ENCODE measurements at regions of chr15 and their contacts with region 1.

Region 1: GRCh38 chr15:51982013-51982769 is 10.6 kb upstream of the LEO1 start:
- DNase-seq: peak; percentile 76
- ATAC-seq: peak; percentile 90
- H3K4me3 ChIP-seq: peak overlapping the region; percentile 47
- H3K27ac ChIP-seq: peak overlapping the region; percentile 53
- H3K4me1 ChIP-seq: peaks cover 19% of the 10 kb centered on the region
- H3K27me3 ChIP-seq: no peaks in the 10 kb centered on the region
- CTCF ChIP-seq: peak; percentile 72

Region 2: DNA sequence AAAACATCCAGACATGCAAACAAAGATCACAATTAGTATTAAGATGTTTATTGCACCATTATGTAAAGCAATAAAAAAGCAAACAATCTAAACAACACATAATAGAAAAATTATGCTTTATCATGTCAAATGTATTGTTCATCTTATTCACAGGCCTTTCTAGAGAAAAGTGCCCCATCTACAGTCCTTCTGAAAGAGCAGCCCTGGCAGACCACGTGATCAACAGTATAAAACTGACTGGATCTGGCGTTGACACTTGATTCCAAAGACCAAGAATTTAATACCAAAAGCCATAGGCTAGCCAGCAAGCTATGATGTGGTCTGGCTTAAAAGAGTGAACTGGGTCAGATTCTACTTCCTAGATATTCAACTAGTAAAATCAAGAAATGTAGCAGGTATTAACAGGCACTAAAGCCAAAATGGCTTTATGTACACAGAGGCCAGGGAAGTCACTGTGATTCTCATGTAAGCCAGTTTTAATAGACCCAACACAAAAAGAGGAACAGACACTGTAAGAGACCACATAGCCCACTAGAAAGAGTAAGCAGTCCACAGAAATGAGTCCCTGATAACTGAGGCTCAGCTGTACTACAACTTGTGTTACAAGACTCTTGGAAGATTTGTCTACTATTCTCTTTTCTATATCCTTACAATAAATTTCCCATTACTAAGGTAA is 392.2 kb before region 1 on chr15:
- CTCF ChIA-PET with region 1: no interaction called
- POLR2A ChIA-PET with region 1: no interaction called
- intact Hi-C with region 1: no loop called
- DNase-seq: no peak
- ATAC-seq: no peak
- H3K4me3 ChIP-seq: no peak overlapping the region
- H3K27ac ChIP-seq: no peak overlapping the region
- H3K4me1 ChIP-seq: no peaks in the 10 kb centered on the region
- H3K27me3 ChIP-seq: no peaks in the 10 kb centered on the region
- CTCF ChIP-seq: no peak

Region 3: DNA sequence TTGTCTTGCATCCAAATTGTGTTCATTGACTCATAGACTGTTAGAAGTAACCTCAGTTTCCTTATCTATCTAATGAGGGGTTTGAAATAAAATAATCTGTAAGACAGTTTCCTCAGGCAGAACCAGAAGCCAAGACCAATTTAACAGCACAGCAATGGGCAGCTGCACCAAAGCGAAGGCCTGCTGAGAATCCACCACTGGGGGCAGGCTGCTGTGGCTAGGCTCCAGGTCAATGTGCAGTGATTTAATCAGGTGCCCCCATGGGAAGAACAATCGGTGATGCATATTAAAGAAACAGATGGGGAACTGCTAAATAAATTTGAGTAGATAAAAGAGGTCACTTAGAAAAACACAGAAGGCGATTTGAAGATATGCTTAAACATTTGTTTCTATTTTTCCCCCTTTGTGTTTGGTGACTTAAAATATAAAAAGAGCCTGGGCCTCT is 180.8 kb before region 1 on chr15:
- CTCF ChIA-PET with region 1: no interaction called
- POLR2A ChIA-PET with region 1: no interaction called
- intact Hi-C with region 1: no loop called
- DNase-seq: peak; percentile 49
- ATAC-seq: peak; percentile 60; the same call in 1 of the 2 replicates
- H3K4me3 ChIP-seq: no peak overlapping the region
- H3K27ac ChIP-seq: no peak overlapping the region
- H3K4me1 ChIP-seq: peaks cover 11% of the 10 kb centered on the region
- H3K27me3 ChIP-seq: no peaks in the 10 kb centered on the region
- CTCF ChIP-seq: peak; percentile 67

Region 4: GRCh38 chr15:51846463-51847230 is 135.5 kb before region 1 on chr15:
- CTCF ChIA-PET with region 1: no interaction called
- POLR2A ChIA-PET with region 1: no interaction called
- intact Hi-C with region 1: no loop called
- DNase-seq: peak; percentile 90
- ATAC-seq: peak; percentile 53
- H3K4me3 ChIP-seq: 0 out of 2 replicates have a peak overlapping the region, but pooled peaks have one; percentile 21
- H3K27ac ChIP-seq: peak overlapping the region; percentile 82
- H3K4me1 ChIP-seq: peaks cover 54% of the 10 kb centered on the region
- H3K27me3 ChIP-seq: no peaks in the 10 kb centered on the region
- CTCF ChIP-seq: no peak

Region 5: DNA sequence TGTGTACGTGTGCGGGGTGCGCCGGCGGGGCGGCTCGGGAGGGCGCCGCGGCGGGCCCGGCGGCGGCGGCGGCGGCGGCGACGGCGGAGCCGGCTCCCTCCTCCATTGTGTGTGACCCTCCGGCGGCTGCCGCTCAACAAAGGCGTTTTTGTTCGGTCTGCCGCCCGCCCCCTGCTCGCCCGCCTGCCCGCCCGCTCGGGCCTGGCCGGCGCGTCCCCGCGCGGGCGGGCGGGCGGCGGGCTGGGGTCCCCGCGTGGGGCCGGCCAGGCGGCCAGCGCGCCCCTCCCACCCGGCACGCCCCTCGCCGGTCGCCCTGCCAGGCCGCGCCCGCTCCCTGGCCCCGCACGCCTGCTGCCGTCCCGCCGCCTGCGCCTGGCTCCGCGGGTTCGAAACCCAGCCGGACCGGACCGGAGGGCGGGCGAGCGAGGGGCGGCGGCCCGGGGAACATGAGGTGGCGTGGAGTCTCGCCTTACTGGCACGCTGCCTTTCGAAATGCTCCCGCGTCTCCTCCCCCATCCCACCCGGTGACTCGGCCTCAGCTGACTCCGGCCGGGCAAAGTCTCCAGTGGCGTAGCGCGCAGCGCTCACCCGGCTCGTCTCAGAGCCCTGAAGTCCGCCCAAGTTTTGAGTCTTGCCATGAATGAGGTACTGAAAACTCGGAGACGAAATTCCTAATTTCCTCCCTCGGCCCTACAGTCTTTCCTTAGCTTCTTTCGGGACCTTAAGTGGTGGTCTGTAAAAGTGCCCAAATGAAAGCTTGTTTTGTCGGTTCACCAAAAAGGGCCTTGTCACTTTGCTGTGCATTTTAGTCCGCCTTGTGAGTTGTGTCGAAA is 37.4 kb after region 1 on chr15:
- CTCF ChIA-PET with region 1: no interaction called
- POLR2A ChIA-PET with region 1: no interaction called
- intact Hi-C with region 1: loop called (anchors 1 kb)
- DNase-seq: peak; percentile 65
- ATAC-seq: peak; percentile 63
- H3K4me3 ChIP-seq: peak overlapping the region; percentile 98
- H3K27ac ChIP-seq: peak overlapping the region; percentile 76
- H3K4me1 ChIP-seq: peaks cover 26% of the 10 kb centered on the region
- H3K27me3 ChIP-seq: no peaks in the 10 kb centered on the region
- CTCF ChIP-seq: no peak

Region 6: DNA sequence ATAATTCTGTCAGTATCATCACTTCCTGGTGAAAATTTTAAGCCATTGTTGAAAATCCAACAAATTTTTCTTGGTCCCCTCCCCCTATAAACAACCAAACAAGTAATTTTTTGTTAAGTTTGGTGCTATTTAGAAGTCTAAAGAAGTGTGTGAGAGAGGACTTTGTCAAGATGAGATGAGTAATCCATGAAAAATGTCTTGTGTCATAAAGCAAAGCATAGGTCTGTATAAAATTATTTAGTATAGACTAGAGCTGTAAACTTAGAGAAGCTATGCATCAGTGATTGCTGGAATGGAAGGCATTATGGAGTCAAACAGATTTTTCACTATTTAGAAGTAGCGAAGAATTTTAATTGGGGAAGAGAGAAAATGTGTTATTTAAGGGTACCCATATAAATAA is 68.2 kb after region 1 on chr15:
- CTCF ChIA-PET with region 1: no interaction called
- POLR2A ChIA-PET with region 1: no interaction called
- intact Hi-C with region 1: loop called (anchors 5 kb)
- DNase-seq: peak; percentile 75
- ATAC-seq: peak; percentile 77
- H3K4me3 ChIP-seq: no peak overlapping the region
- H3K27ac ChIP-seq: no peak overlapping the region; the same call in 1 of the 2 replicates
- H3K4me1 ChIP-seq: peaks cover 41% of the 10 kb centered on the region
- H3K27me3 ChIP-seq: no peaks in the 10 kb centered on the region
- CTCF ChIP-seq: no peak

Region 7: GRCh38 chr15:52078876-52079700 is 96.9 kb after region 1 on chr15:
- CTCF ChIA-PET with region 1: interaction called, 5 read pairs
- POLR2A ChIA-PET with region 1: interaction called, 4 read pairs
- intact Hi-C with region 1: loop called (anchors 2 kb)
- DNase-seq: peak; percentile 68
- ATAC-seq: peak; percentile 60
- H3K4me3 ChIP-seq: no peak overlapping the region
- H3K27ac ChIP-seq: no peak overlapping the region
- H3K4me1 ChIP-seq: peaks cover 22% of the 10 kb centered on the region
- H3K27me3 ChIP-seq: no peaks in the 10 kb centered on the region
- CTCF ChIP-seq: peak; percentile 85

Region 8: DNA sequence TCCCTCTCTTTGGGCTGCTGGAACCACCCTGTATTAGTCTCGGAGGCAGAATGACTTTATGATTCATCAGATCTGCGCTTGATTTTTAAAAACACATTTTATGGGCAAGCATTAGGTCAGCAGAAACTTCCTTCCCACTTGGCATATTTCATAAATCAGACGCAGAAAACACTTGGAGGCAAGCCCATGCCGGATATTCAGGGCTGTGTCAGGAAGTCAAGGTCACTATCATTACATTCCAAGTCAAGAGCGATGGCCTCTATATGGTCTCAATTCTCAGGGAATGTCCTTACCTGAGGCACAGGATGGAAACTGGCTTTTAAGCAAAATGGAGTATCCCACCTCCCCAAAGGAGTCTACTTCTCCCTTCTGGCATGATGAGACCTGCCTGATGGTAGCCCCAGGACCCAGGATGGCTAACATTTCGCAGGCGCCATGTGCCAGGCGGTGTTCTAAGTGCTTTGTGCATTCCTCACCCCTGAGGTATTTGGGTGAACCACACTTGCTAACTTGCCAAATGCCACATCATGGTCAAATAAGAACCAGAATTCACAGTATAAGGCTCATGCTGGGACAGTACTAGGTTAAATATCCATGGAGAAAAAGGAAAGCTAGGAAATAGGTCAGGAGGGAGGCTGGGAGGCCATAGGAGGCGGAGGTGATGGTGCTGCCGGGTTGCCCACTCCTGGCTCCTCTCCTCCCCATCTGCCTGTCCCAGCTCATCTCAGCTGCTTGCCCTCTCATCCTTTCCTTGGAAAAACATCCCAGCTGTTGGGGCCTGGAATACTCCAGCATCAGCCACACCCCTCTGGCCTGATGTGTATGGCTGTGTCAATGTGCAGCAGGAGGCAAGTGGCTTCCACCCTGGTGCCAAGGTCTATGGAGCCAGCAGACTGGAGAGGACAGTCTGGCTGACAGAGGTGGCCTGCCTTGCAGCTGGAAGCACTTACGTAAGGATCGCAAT is 111.6 kb after region 1 on chr15:
- CTCF ChIA-PET with region 1: no interaction called
- POLR2A ChIA-PET with region 1: no interaction called
- intact Hi-C with region 1: loop called (anchors 5 kb)
- DNase-seq: peak; percentile 93
- ATAC-seq: peak; percentile 85
- H3K4me3 ChIP-seq: no peak overlapping the region; the same call in 1 of the 2 replicates
- H3K27ac ChIP-seq: peak overlapping the region; percentile 97
- H3K4me1 ChIP-seq: peaks cover 33% of the 10 kb centered on the region
- H3K27me3 ChIP-seq: no peaks in the 10 kb centered on the region
- CTCF ChIP-seq: no peak

Region 9: DNA sequence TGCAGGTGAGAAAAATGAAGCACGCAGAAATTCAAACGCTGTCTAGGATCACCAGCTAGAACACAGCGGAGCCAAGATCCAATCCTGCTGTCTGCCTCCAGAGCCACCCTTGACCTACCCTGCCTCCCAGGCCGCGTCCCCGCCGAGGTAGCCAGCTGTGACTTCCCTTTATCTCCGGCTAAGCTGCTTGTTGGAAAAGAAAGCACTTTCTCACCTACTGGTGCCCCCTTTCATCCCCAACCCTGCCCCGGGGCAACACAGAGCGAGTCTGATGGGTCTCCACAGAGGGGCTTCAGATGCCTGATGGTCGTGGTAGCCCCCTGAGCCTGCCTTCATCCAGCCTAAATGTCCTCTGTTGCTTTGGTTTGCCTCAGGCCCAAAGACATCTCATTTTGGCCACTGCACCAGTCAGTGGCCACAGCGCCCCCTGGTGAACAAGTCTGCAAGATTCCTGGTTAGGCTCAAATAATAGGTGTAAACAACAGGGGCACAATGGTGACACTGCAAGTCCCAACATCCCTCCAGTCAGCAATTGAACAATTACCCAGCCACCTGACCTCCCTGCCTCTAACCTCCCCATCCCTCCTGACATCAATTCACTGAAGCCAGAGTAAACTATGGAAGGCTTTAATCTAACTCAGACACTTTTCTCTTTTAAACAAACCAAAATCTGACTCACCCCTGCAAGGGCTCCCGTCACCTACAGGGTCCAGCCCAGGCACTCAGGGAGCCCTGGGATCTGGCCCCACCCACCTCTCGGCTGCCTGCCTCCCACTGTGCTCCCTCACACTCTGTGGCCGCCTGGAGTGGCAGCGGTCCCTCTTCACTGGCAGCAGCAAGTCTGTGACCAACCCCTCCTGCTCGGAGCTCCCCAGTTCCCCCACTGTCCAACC is 157.7 kb after region 1 on chr15:
- CTCF ChIA-PET with region 1: interaction called, 5 read pairs
- POLR2A ChIA-PET with region 1: no interaction called
- intact Hi-C with region 1: loop called (anchors 1 kb)
- DNase-seq: peak; percentile 79
- ATAC-seq: peak; percentile 42
- H3K4me3 ChIP-seq: no peak overlapping the region
- H3K27ac ChIP-seq: no peak overlapping the region
- H3K4me1 ChIP-seq: peaks cover 15% of the 10 kb centered on the region
- H3K27me3 ChIP-seq: no peaks in the 10 kb centered on the region
- CTCF ChIP-seq: peak; percentile 85

Region 10: DNA sequence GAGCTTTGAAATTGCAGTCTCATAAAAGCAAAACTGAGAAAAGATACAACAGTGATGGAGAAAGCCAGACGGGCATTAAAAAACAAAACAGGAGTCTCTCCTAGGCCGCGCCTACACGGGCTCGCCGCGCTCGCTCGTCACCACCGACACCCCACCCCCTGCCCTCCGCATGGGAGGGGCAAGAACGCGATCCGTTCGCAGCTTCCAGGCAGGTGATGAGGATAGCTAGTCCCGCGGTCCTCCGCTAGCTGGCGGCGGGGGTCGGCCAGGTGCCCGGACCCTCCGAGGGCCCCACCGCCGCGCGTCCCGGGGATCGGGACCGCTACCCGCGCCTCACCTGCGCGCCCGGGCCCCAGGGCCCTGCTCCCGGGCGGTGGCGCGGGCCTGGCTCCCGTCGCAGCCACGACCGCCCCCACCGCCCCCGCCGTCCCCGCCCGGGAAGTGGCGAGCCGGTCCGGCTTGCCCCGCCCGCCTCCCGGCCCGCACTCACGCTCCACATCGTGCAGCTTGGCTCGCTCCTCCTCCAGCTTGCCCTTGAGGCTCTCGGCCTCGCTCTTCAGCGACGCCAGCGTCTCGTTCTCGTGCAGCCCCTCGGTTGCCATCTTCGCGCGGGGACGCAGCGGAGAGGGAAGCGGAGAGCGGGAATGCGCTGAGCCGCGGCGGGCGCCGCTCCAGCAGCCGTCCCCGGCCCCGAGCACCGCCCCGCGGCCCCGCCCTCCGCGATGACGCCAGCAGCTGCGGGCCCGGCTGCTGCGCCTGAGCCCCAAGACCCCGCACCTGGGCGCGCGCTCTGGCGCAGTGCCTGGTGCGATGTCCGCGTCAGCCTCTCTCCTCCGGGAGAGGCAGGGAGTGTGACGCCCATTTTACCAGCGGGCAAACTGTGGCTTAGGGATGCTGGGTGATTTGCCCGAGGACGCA is 197.3 kb after region 1 on chr15:
- CTCF ChIA-PET with region 1: no interaction called
- POLR2A ChIA-PET with region 1: interaction called, 23 read pairs
- intact Hi-C with region 1: no loop called
- DNase-seq: peak; percentile 78
- ATAC-seq: peak; percentile 86
- H3K4me3 ChIP-seq: peak overlapping the region; percentile 93
- H3K27ac ChIP-seq: peak overlapping the region; percentile 56
- H3K4me1 ChIP-seq: peaks cover 7% of the 10 kb centered on the region; the same call in 1 of the 2 replicates
- H3K27me3 ChIP-seq: no peaks in the 10 kb centered on the region
- CTCF ChIP-seq: no peak

Measured in PC-3 (cell line).